Heart left ventricle (tissue), 16 donors: ENCODE measurements at regions of chr16 and their contacts with region 1.

Region 1: DNA sequence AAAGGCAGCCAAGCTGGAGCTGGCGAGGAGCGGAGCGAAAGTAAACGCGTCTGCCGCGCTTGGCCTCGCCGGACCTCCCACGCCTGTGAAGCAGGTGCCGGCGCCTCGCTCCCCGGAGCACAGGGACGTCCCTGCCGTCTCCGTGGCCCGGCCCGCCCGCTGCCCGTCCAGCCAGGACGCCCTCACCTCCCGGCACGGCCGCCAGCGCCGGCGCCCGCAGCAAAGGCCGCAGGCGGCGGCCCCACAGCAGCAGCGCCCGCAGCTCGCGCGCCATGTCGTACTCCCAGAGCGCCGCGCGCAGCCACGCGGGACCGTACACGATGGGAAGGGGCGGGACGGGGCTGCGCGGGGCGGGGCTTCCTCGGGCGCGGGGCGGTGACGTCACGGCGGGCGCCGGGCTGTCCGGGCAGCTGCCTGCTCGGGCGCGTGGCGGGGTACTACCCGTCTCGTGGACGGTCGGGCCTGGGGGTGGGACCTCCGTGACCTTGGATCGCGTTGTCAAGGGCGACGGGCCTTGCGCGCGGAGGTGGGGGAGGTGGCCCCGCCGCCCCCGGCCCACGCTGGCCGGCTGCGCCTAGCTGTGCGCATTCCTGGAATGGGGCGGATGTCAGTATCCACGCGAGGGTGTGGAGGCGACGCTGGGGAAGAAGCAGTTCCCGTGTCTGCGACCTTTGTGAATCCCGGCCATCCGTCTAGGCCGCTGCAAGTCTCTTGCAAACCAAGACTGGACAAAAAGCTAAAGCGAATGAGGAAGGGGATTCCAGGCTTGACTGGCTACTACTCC is at the start of gene TRAP1:
- DNase-seq: peak; percentile 90 to 94 (median 93)
- ATAC-seq: peak; percentile 86 to 98 (median 97)
- H3K4me3 ChIP-seq: peak within 1 kb of the TSS; percentile 63 to 98 (median 92)
- H3K27ac ChIP-seq: peak within 1 kb of the TSS; percentile 76 to 98 (median 94)
- H3K4me1 ChIP-seq: peaks cover 0 to 22% (median 10%) of the 10 kb centered on the region in 12 donors
- H3K27me3 ChIP-seq: no peaks in the 10 kb centered on the region
- CTCF ChIP-seq: no peak
- POLR2A ChIP-seq: peak; percentile 45 to 96
- total RNA-seq, gene TRAP1: 93.9 to 142 (median 121) TPM

Region 2: DNA sequence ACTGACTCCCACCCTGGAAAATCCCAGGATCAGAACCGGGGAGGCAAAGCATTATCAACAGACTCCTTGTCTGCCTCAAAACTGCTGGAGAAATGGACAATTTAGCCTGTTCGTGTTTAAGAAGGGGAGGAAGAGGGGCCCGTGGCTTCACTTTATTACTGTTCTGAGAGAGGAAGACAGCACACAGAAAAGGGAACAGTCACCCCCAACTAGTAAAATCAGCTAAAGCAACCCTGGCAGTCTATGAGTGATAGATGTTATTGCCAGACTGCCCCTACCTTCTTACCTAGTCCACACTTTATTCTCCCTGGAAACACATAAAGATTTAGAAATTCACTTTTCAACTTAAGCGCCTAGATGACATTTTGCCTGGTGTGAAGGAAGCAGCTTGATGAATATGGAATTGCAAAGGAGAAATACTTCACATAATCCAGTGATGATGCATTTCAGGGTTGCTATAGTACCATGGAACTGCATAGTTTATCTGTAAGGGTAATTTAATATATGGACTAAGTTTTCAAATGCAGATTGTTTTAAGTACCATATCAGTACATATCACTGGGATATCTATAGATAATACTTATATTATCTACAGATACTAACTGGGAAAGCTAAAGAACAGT is 36.8 kb after region 1 on chr16:
- intact Hi-C with region 1: no loop called
- DNase-seq: no peak
- ATAC-seq: peak in 1 of 4 donors; percentile 45
- H3K4me3 ChIP-seq: no peak overlapping the region
- H3K27ac ChIP-seq: peak overlapping the region in 6 of 12 donors; percentile 6 to 47 (median 14)
- H3K4me1 ChIP-seq: peaks cover 0 to 18% (median 0%) of the 10 kb centered on the region in 12 donors
- H3K27me3 ChIP-seq: no peaks in the 10 kb centered on the region
- CTCF ChIP-seq: no peak
- POLR2A ChIP-seq: no peak

Region 3: GRCh38 chr16:3945751-3946603 is 228.6 kb after region 1 on chr16:
- intact Hi-C with region 1: no loop called
- DNase-seq: peak in 2 of 5 donors; percentile 54 to 64
- ATAC-seq: no peak
- H3K4me3 ChIP-seq: no peak overlapping the region
- H3K27ac ChIP-seq: peak overlapping the region in 2 of 12 donors; percentile 12 to 36
- H3K4me1 ChIP-seq: peaks cover 4 to 34% (median 23%) of the 10 kb centered on the region in 12 donors
- H3K27me3 ChIP-seq: no peaks in the 10 kb centered on the region
- CTCF ChIP-seq: no peak
- POLR2A ChIP-seq: no peak

Region 4: DNA sequence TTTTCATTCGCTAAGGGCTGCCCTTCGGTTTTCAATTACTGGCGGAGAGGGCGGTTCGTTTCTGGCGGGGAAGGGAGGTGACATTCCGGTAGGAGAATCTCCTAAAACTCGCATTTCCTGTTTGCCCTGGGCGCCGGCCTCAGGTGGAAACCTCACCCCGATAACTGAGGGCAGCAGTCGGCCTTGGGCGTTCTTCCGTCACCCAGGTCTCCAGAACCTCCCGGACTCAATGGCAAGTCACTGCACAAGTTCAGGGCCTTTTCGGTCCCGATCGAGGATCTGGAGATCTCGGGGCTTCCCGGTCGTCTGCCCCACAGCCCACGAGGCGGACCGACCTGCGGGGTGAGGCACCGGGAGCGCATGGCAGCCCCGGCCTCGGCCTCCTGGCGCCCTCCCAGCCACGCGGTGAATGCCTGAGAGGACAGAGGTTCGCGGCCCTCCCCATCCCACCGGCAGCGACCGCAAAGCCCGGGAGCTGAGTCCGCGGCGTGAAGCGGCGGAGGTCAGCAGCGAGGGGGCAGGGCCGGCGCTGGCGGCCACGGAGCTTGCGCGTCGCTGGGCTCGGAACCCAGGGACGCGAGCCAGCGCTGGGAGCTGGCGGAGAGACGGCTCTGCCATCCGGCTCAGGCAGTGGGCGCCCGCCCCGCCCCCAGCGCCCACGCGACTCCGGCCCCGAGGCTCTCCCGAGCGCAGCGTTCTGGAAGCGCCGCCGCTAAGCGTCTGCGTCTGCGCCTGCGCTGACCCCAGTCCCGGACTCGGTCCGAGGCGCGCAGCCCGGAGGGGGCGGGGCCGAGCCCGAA is 466.0 kb after region 1 on chr16:
- intact Hi-C with region 1: loop called in 1 of 10 experiments (anchors 10 kb)
- DNase-seq: peak; percentile 93 to 98 (median 94)
- ATAC-seq: peak; percentile 79 to 96 (median 96)
- H3K4me3 ChIP-seq: peak overlapping the region; percentile 43 to 90 (median 76)
- H3K27ac ChIP-seq: peak overlapping the region; percentile 89 to 99 (median 96)
- H3K4me1 ChIP-seq: peaks cover 0 to 17% (median 7%) of the 10 kb centered on the region in 12 donors
- H3K27me3 ChIP-seq: peaks cover 0 to 12% (median 0%) of the 10 kb centered on the region in 9 donors
- CTCF ChIP-seq: peak in 5 of 12 donors; percentile 14 to 51 (median 43)
- POLR2A ChIP-seq: peak in 1 of 2 donors; percentile 83